ENCODE measurements at regions of chr6 and their contacts with region 1.

Region 1: DNA sequence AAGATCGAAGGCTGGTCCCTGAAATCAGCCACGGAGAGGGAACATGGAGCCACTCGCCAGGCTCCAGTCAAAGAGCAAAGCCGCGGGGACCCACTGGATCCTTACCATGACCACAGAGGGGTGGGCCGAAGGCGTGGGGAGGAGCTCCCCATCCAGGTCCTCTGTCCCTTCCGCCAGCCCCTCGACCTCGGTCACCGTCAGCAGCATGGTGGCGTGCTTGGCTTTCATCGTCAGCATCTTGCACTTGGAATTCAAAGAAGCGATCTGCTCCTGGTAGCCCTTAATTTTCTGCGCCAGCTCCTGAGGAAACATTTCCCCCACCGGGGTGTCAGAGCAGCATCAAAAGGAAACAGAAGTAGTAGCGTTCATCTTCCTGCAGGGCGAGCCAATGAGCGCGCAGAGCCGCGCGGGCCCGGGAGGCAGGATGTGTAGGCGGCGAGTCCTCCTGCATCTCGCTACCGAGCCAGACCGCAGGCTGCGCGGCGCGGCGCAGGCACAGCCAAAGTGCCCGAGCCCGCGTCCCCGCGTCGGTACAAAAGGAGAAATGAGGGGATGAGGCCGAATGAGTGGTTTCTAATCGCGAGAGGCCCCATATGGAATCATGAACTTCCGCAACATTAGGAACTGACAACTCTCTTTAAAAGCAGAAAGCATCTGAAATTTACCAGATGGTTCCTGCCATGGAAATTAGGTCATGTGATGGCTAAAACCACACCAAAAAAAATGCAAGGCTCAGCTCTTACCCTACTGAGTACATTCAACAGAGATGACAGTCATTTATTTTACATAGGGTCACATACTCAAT is 335.2 kb downstream of the SYNE1 start:
- DNase-seq: peak; percentile 89 to 93
- H3K4me3 ChIP-seq: peak overlapping the region; percentile 76
- H3K4me3 Mint-ChIP-seq: peak overlapping the region; percentile 99
- H3K27ac Mint-ChIP-seq: peak overlapping the region; percentile 95
- H3K4me1 ChIP-seq: peaks cover 4% of the 10 kb centered on the region; the same call in 1 of the 2 replicates
- H3K4me1 Mint-ChIP-seq: peaks cover 13% of the 10 kb centered on the region
- H3K27me3 ChIP-seq: no peaks in the 10 kb centered on the region
- H3K27me3 Mint-ChIP-seq: no peaks in the 10 kb centered on the region
- CTCF ChIP-seq: peak; percentile 59 to 71

Region 2: GRCh38 chr6:152277826-152278329 is 24.1 kb before region 1 on chr6:
- CTCF ChIA-PET with region 1: interaction called, 3 read pairs
- POLR2A ChIA-PET with region 1: interaction called, 4 read pairs
- intact Hi-C with region 1: loop called (anchors 2 kb)
- DNase-seq: peak; percentile 54 to 61
- H3K4me3 ChIP-seq: peak overlapping the region; percentile 6; the same call in 1 of the 2 replicates
- H3K4me3 Mint-ChIP-seq: peak overlapping the region; percentile 62
- H3K27ac Mint-ChIP-seq: peak overlapping the region; percentile 58
- H3K4me1 ChIP-seq: peaks cover 17% of the 10 kb centered on the region
- H3K4me1 Mint-ChIP-seq: peaks cover 7% of the 10 kb centered on the region
- H3K27me3 ChIP-seq: no peaks in the 10 kb centered on the region
- H3K27me3 Mint-ChIP-seq: no peaks in the 10 kb centered on the region
- CTCF ChIP-seq: no peak

Region 3: DNA sequence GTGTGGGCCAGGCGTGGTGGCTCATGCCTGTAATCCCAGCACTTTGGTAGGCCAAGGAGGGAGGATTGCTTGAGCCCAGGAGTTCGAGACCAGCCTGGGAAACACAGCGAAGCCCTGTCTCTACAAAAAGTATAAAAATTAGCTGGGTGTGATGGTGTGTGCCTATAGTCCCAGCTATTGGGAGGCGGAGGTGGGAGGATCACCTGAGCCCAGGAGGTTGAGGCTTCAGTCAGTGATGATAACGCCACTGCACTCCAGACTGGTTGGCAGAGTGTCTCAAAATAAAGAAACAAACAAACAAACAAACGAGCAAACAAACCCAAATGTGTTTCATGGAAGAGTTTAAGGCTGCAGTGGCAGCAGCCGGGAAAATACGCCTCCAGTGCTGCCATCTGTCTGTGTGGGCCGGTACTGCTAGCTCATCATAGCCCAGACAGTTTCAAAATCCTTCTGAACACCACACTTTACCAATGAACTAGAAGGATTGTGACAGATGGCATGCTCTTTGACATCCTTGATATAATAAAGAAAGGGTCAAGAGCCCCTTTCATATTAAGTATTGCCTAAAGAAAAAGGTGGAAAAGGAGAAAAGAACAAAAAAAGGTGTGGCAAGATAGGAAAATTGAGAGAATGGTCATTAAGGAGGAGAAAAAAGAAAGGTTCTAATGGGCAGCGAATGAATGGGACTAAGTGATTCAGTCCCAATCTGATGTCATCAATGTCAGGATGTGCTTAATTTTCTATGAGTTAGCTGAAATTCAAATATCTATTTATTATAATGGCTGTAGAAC is 36.6 kb after region 1 on chr6:
- CTCF ChIA-PET with region 1: interaction called, 24 read pairs
- POLR2A ChIA-PET with region 1: interaction called, 7 read pairs
- intact Hi-C with region 1: loop called (anchors 1 kb)
- DNase-seq: peak in 1 of 2 experiments; percentile 59
- H3K4me3 ChIP-seq: no peak overlapping the region
- H3K4me3 Mint-ChIP-seq: no peak overlapping the region
- H3K27ac Mint-ChIP-seq: no peak overlapping the region
- H3K4me1 ChIP-seq: peaks cover 22% of the 10 kb centered on the region
- H3K4me1 Mint-ChIP-seq: peaks cover 24% of the 10 kb centered on the region
- H3K27me3 ChIP-seq: no peaks in the 10 kb centered on the region
- H3K27me3 Mint-ChIP-seq: no peaks in the 10 kb centered on the region
- CTCF ChIP-seq: peak; percentile 75 to 77

Measured in Caco-2 (cell line).